Right ventricle myocardium inferior (tissue), 1 donor: ENCODE measurements at regions of chr15 and their contacts with region 1.

Region 1: GRCh38 chr15:83066734-83067637 is at the start of gene BTBD1:
- DNase-seq: peak; percentile 97
- ATAC-seq: peak; percentile 99
- total RNA-seq, gene BTBD1: 150 TPM

Region 2: GRCh38 chr15:83108266-83109226 is 41.6 kb after region 1 on chr15:
- intact Hi-C with region 1: loop called (anchors 5 kb)
- DNase-seq: peak; percentile 86
- ATAC-seq: peak; percentile 85

Region 3: GRCh38 chr15:83207622-83208411 is 140.8 kb after region 1 on chr15 and contains the start of gene HDGFL3:
- intact Hi-C with region 1: loop called (anchors 2 kb)
- DNase-seq: peak; percentile 85
- ATAC-seq: peak; percentile 50
- total RNA-seq, gene HDGFL3: 32.8 TPM